MCF 10A (cell line): ENCODE measurements at regions of chr16 and their contacts with region 1.

Region 1: DNA sequence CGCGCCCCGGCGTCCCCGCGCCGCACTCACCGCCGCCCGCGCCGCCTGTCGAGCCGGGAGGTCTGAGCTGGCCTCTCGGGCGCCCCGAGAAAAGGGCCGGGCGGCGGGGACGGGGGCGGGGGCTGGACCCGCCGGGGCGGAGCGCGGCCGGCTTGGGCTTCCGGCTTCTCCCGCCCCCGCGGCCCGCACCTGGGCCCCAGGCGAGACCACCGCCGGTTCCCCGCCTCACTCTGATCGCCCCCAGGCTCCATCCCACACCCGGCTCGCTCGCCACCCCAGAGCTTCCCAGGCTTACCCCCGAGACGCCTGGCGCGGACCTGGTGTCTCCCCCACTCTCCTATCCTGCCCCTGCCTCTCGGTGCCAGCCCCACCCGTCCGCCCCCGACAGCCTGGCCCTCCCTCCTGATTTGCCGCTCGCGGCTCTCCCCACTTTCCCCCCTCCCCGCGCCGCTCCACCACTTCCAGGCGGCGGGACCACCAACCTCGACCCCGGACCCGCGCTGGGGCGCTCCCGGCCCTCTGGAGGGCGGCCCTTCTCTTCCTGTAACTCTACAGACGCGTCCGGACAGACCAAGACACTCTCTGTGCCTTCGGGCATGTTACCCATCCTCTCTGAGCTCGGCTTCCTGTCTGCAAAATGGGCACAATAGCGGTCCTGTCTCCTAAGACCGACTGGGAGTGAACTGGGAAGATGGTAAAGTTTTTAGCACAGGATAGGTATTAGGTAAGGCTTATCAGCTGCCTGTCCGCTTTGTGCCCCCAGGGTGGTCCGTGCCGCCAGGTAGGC is at the start of gene LITAF:
- DNase-seq: peak; percentile 66
- H3K4me3 Mint-ChIP-seq: peak within 1 kb of the TSS; percentile 84
- H3K27ac Mint-ChIP-seq: peak within 1 kb of the TSS; percentile 96
- H3K4me1 Mint-ChIP-seq: peaks cover 31% of the 10 kb centered on the region
- H3K27me3 Mint-ChIP-seq: no peaks in the 10 kb centered on the region
- CTCF ChIP-seq: no peak
- total RNA-seq, gene LITAF: 120 and 161 TPM in 2 replicates

Region 2: DNA sequence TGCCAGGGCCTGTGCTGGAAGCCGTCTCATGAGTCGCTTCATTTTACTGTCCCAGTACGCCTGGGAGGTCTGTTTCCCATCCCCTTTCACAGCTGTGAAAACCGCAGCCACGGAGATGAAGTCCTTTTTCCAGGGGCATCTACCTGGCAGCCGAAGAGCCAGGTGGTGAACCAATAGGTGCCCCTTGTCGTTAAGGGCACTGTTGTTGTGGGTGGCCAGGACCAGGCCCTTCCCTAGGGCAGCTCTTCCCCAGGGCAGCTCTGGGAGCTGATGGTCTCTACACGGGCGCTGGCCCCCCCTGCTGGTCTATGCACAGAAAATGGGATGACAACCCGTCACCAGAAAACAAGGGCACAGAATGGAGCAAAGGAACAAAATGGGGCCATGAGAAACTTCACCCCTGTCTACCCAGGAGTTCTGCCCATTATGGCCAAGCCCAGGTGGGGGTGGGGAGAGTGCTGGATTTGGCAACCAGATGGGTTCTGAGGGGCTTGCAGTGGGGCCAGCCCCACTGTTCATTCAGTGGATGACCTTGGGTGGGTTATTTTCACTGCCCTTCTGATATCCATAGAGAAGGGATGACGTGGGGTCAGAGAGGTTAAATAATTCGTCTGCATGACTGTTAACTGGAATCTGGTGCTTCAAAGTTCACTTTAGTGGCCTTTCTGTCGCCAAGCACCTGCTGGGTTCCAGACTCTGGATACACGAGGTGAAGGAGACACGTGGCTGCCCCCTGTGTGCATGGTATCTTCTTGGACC is 230.3 kb before region 1 on chr16:
- CTCF ChIA-PET with region 1: no interaction called
- POLR2A ChIA-PET with region 1: no interaction called
- intact Hi-C with region 1: no loop called
- DNase-seq: peak; percentile 67
- H3K4me3 Mint-ChIP-seq: no peak overlapping the region
- H3K27ac Mint-ChIP-seq: peak overlapping the region; percentile 44
- H3K4me1 Mint-ChIP-seq: peaks cover 20% of the 10 kb centered on the region
- H3K27me3 Mint-ChIP-seq: no peaks in the 10 kb centered on the region
- CTCF ChIP-seq: peak; percentile 14

Region 3: DNA sequence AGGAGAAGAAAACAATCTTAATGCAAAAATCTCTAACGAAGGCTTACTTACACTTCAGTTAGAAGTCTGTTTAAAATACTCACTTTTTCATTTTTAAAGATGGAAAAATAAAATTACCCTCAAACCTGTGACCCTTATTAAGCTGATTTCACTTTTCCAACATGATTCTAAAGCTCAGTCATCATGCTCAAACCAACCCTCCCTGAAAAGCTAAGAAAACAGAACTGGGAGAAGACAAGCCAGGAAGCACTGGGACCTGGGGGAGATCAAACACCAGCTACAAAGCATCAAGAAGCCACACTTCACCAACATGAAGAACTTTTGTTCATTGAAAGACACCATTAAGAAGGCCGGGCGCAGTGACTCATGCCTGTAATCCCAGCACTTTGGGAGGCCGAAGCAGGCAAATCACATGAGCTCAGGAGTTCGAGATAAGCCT is 89.2 kb before region 1 on chr16:
- CTCF ChIA-PET with region 1: no interaction called
- POLR2A ChIA-PET with region 1: interaction called, 15 read pairs
- intact Hi-C with region 1: no loop called
- DNase-seq: peak; percentile 75
- H3K4me3 Mint-ChIP-seq: peak overlapping the region; percentile 41
- H3K27ac Mint-ChIP-seq: peak overlapping the region; percentile 97
- H3K4me1 Mint-ChIP-seq: peaks cover 20% of the 10 kb centered on the region
- H3K27me3 Mint-ChIP-seq: no peaks in the 10 kb centered on the region
- CTCF ChIP-seq: no peak

Region 4: GRCh38 chr16:11563493-11564040 is 23.5 kb before region 1 on chr16:
- CTCF ChIA-PET with region 1: no interaction called
- POLR2A ChIA-PET with region 1: interaction called, 19 read pairs
- intact Hi-C with region 1: no loop called
- DNase-seq: no peak
- H3K4me3 Mint-ChIP-seq: no peak overlapping the region
- H3K27ac Mint-ChIP-seq: peak overlapping the region; percentile 97
- H3K4me1 Mint-ChIP-seq: peaks cover 24% of the 10 kb centered on the region
- H3K27me3 Mint-ChIP-seq: no peaks in the 10 kb centered on the region
- CTCF ChIP-seq: no peak

Region 5: GRCh38 chr16:11597239-11598101 is 10.4 kb after region 1 on chr16:
- CTCF ChIA-PET with region 1: interaction called, 11 read pairs
- POLR2A ChIA-PET with region 1: interaction called, 8 read pairs
- intact Hi-C with region 1: no loop called
- DNase-seq: no peak
- H3K4me3 Mint-ChIP-seq: no peak overlapping the region
- H3K27ac Mint-ChIP-seq: no peak overlapping the region
- H3K4me1 Mint-ChIP-seq: peaks cover 6% of the 10 kb centered on the region
- H3K27me3 Mint-ChIP-seq: no peaks in the 10 kb centered on the region
- CTCF ChIP-seq: no peak

Region 6: DNA sequence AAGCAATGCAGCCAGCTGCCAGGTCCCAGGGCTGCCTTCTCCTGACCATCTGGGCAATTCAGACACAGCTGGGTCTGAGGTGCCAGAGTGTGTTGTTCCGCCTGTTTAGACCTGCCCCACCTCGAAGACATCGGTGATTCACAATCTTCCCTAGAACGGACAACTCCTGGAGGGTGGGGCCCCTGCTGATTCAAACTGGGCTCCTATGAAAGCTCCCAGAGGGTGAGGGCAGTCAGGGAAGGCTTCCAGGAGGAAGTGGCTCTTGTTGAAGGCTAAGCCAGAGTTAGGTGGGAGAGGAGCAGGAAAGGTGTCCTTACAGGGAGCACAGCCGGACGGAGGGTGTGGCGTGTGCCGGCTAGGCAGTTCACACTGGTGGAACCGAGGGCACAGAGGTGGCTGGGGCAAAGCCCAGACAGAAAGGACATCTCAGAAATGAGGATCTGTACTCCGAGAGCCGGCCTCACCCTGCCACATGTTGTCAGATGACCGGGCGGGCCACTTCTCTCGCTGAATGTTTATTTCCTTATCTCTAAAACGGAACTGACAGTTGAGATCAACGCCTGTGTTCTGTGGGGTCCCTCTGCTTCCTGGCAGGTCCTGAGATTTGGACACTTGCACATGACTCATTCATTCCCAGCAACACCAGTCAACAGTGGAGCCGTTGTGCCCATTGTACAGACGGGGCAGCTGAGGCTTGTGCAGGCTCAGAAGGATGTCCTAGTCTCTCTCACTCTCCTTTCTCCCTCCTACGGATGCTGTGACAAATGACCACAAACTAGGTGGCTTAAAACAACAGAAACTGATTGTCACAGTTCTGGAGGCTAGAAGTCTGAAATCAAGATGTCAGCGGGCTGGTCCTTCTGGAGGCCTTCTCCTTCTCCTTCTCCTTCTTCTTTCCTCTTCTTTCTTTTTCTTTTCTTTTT is 26.6 kb after region 1 on chr16:
- CTCF ChIA-PET with region 1: interaction called, 4 read pairs
- POLR2A ChIA-PET with region 1: interaction called, 28 read pairs
- intact Hi-C with region 1: no loop called
- DNase-seq: peak; percentile 96
- H3K4me3 Mint-ChIP-seq: peak overlapping the region; percentile 39
- H3K27ac Mint-ChIP-seq: peak overlapping the region; percentile 90
- H3K4me1 Mint-ChIP-seq: peaks cover 28% of the 10 kb centered on the region
- H3K27me3 Mint-ChIP-seq: no peaks in the 10 kb centered on the region
- CTCF ChIP-seq: no peak

Region 7: DNA sequence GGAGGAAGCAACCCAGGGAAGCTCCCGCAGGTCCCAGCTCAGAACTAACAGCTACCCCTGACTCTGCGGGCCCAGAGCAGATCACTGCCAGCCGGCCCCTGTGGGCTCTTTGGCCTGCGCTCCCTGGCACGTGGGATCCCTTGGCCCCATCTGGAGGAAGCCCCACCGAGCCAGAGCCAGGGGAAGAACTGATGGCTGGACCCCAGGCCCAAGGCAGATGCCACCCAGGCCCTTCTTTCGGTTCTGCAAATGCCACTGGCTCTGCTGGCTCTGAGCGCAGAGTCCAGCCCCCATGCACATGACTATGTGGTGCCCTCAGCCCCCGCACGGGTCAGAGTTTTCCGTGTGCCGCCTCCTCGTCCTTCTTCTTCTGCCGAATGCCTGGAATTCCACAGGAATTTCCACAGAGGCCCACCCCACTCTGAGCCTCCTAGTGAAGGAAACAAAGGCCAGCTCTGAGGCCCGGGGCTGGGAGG is 45.5 kb after region 1 on chr16:
- CTCF ChIA-PET with region 1: interaction called, 5 read pairs
- POLR2A ChIA-PET with region 1: interaction called, 24 read pairs
- intact Hi-C with region 1: no loop called
- DNase-seq: no peak
- H3K4me3 Mint-ChIP-seq: no peak overlapping the region
- H3K27ac Mint-ChIP-seq: no peak overlapping the region
- H3K4me1 Mint-ChIP-seq: peaks cover 20% of the 10 kb centered on the region
- H3K27me3 Mint-ChIP-seq: no peaks in the 10 kb centered on the region
- CTCF ChIP-seq: no peak

Region 8: DNA sequence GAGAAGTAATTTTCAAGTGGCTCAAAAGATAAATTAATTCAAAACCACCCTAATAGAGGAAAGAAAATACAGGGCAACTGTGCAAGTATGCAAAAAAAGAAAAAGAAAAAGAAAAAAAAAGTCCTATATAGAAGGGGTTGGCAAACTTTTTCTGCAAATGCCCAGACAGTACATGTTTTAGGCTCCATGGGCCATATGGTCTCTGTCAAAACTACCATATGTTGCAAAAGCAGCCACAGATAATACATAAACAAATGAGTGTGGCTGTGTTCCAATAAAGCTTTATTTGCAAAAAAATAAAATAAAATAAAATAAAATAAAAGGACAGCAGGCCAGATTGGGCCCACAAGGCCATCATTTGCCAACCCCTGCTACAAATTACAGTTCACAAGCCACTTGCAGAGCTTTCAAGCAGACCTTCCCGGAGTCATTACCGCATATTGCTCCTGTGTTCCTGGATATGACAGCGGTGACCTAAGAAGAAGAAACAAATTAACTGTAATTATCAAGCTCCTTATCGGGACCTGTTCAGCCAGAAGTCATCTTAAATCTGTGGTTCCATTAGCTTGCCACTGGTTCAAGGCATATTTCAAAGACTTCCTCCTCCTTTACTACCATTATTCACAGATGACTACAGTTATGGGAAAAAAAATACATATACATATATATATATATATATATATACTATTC is 194.1 kb after region 1 on chr16:
- CTCF ChIA-PET with region 1: no interaction called
- POLR2A ChIA-PET with region 1: no interaction called
- intact Hi-C with region 1: no loop called
- DNase-seq: no peak
- H3K4me3 Mint-ChIP-seq: peak overlapping the region; percentile 54
- H3K27ac Mint-ChIP-seq: peak overlapping the region; percentile 95
- H3K4me1 Mint-ChIP-seq: peaks cover 25% of the 10 kb centered on the region
- H3K27me3 Mint-ChIP-seq: no peaks in the 10 kb centered on the region
- CTCF ChIP-seq: no peak

Region 9: DNA sequence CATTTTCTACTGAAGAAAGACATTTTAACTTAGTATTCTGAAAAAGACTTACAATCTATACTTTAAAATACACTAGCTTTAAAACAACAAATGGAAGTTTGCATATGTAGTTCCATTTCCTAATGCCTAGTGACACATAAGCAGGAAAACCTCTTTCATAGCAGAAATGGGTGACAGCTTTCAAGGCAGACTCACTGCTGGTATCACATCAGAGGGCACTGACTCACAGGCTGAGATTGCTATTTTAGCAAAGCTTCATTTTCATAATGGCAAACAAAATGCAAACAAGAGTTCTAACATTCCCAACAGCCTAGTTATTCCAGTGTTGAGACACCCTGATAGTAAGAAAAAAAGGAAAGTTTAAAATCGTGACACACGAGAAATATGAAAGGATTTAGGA is 309.7 kb after region 1 on chr16:
- CTCF ChIA-PET with region 1: no interaction called
- POLR2A ChIA-PET with region 1: no interaction called
- intact Hi-C with region 1: no loop called
- DNase-seq: peak; percentile 21
- H3K4me3 Mint-ChIP-seq: no peak overlapping the region
- H3K27ac Mint-ChIP-seq: no peak overlapping the region
- H3K4me1 Mint-ChIP-seq: peaks cover 16% of the 10 kb centered on the region
- H3K27me3 Mint-ChIP-seq: no peaks in the 10 kb centered on the region
- CTCF ChIP-seq: no peak

Region 10: DNA sequence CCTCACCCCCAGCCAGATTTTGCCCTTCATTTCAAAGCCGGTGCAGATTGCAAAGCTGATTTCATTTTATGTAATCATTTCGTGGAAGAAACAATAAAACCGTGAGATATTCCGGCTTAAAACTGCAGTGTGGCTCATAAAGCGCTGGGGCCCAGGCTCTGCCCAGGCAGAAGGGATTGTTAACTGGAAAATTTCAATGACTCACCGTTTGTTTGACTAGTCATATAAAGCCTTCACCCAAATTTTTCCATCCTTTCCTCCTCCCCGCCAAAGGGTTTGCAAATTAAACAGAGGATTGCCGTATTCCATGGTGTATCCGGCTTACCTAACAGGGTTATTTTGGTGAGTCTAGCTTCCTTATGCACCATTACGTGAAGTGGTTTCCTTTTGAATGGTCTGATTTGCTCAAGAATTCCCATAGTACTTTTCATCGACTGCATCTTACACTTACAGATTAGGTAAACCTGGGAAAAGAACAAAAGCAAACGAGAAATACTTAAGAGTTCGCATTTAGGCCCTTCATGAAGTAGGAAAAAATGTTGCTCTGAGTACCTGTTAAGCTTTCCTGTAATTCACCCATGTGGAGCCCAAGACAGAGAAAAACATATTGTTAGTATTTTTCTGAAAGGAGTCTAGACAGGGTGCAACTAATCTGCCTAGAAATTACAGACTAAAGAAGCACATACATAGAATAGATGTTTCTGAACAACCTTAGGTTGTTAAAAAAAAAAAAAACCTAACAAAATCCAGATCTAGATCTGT is 329.7 kb after region 1 on chr16:
- CTCF ChIA-PET with region 1: no interaction called
- POLR2A ChIA-PET with region 1: no interaction called
- intact Hi-C with region 1: no loop called
- DNase-seq: peak; percentile 54
- H3K4me3 Mint-ChIP-seq: peak overlapping the region; percentile 88
- H3K27ac Mint-ChIP-seq: peak overlapping the region; percentile 71
- H3K4me1 Mint-ChIP-seq: peaks cover 11% of the 10 kb centered on the region
- H3K27me3 Mint-ChIP-seq: no peaks in the 10 kb centered on the region
- CTCF ChIP-seq: no peak